Sigmoid colon (tissue), 7 donors: ENCODE measurements at regions of chr5 and their contacts with region 1.

Region 1: GRCh38 chr5:177403792-177404640 is 3.6 kb upstream of the PFN3 start:
- DNase-seq: peak; percentile 93
- H3K4me3 ChIP-seq: peak overlapping the region; percentile 20 to 60 (median 52)
- H3K27ac ChIP-seq: peak overlapping the region in 1 of 4 donors; percentile 39
- H3K4me1 ChIP-seq: peaks cover 0 to 43% (median 40%) of the 10 kb centered on the region in 4 donors
- H3K27me3 ChIP-seq: peaks cover 41 to 68% (median 63%) of the 10 kb centered on the region in 3 donors
- CTCF ChIP-seq: peak; percentile 45 to 79 (median 69)
- EP300 ChIP-seq: no peak
- POLR2A ChIP-seq: no peak

Region 2: GRCh38 chr5:177276886-177277285 is 127.1 kb before region 1 on chr5:
- intact Hi-C with region 1: no loop called
- DNase-seq: no peak
- H3K4me3 ChIP-seq: no peak overlapping the region
- H3K27ac ChIP-seq: no peak overlapping the region
- H3K4me1 ChIP-seq: no peaks in the 10 kb centered on the region
- H3K27me3 ChIP-seq: no peaks in the 10 kb centered on the region
- CTCF ChIP-seq: no peak
- EP300 ChIP-seq: no peak
- POLR2A ChIP-seq: no peak

Region 3: DNA sequence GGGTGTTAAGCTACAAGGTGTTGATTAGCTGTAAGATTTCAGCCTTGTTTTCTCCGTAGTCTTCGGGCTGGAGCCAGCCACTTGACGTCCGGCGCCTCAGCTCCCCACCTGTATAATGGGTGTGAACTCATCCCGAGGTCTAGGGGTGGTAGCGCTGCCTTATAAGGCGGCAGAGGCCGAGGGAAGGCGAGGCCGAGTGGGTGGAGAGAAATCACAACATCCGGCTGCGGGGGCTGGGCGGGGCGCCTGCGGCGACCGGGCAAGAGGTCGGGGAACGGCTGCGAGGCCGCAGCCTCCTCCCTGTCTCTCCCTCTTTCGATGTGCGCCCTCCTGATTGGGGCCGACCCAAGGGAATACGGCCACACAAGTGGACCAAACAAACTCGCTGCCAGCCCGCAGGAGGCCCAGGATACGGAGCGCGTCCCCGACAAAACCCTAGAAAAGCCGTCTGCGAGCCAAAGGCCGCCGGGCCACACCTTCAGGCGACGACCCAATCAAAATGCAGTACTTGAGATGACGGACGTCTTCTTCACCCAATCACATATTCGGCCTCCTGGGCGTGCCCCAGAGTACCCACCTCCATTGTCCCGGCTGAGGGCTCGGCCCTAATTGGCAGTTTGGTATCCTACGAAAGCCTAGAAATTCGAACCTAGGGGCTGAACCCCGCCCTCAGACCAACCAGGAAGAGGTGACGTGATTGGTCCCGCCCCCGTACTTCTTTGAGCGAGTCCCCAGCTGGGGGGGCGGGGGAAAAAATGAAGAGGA is 22.0 kb after region 1 on chr5:
- intact Hi-C with region 1: loop called (anchors 2 kb)
- DNase-seq: peak; percentile 100
- H3K4me3 ChIP-seq: peak overlapping the region; percentile 40 to 53 (median 52)
- H3K27ac ChIP-seq: peak overlapping the region; percentile 89 to 95 (median 92)
- H3K4me1 ChIP-seq: peaks cover 0 to 37% (median 32%) of the 10 kb centered on the region in 4 donors
- H3K27me3 ChIP-seq: no peaks in the 10 kb centered on the region
- CTCF ChIP-seq: no peak
- EP300 ChIP-seq: no peak
- POLR2A ChIP-seq: peak; percentile 72 to 91

Region 4: GRCh38 chr5:177578331-177578730 is 174.3 kb after region 1 on chr5:
- intact Hi-C with region 1: no loop called
- DNase-seq: no peak
- H3K4me3 ChIP-seq: no peak overlapping the region
- H3K27ac ChIP-seq: no peak overlapping the region
- H3K4me1 ChIP-seq: no peaks in the 10 kb centered on the region
- H3K27me3 ChIP-seq: no peaks in the 10 kb centered on the region
- CTCF ChIP-seq: no peak
- EP300 ChIP-seq: no peak
- POLR2A ChIP-seq: no peak